ENCODE measurements at regions of chr20 and their contacts with region 1.

Region 1: GRCh38 chr20:44388466-44389023 is 33.0 kb downstream of the HNF4A start:
- DNase-seq: peak; percentile 85
- H3K4me3 ChIP-seq: no peak overlapping the region
- H3K27ac ChIP-seq: no peak overlapping the region
- H3K4me1 ChIP-seq: peaks cover 0 to 2% of the 10 kb centered on the region in 2 experiments; a peak in 1 of 4 replicates
- H3K27me3 ChIP-seq: no peaks in the 10 kb centered on the region; the same call in 1 of the 2 replicates
- CTCF ChIP-seq: peak; percentile 76
- EP300 ChIP-seq: no peak
- RAD21 ChIP-seq: peak; percentile 80

Region 2: GRCh38 chr20:44222633-44223368 is 165.7 kb before region 1 on chr20:
- CTCF ChIA-PET with region 1: interaction called, 89 read pairs
- POLR2A ChIA-PET with region 1: no interaction called
- DNase-seq: no peak
- H3K4me3 ChIP-seq: peak overlapping the region in 1 of 2 experiments; percentile 33; a peak in 1 of 4 replicates
- H3K27ac ChIP-seq: no peak overlapping the region
- H3K4me1 ChIP-seq: peaks cover 0 to 12% of the 10 kb centered on the region in 2 experiments; a peak in 1 of 4 replicates
- H3K27me3 ChIP-seq: no peaks in the 10 kb centered on the region
- CTCF ChIP-seq: peak; percentile 17; the same call in 1 of the 2 replicates
- EP300 ChIP-seq: no peak
- RAD21 ChIP-seq: no peak

Region 3: GRCh38 chr20:44402391-44403193 is 14.0 kb after region 1 on chr20:
- CTCF ChIA-PET with region 1: interaction called, 12 read pairs
- POLR2A ChIA-PET with region 1: interaction called, 3 read pairs
- DNase-seq: peak; percentile 84
- H3K4me3 ChIP-seq: no peak overlapping the region
- H3K27ac ChIP-seq: peak overlapping the region in 1 of 2 experiments; percentile 29; a peak in 2 of 4 replicates
- H3K4me1 ChIP-seq: peaks cover 0 to 10% of the 10 kb centered on the region in 2 experiments; a peak in 1 of 4 replicates
- H3K27me3 ChIP-seq: no peaks in the 10 kb centered on the region; the same call in 1 of the 2 replicates
- CTCF ChIP-seq: no peak
- EP300 ChIP-seq: no peak
- RAD21 ChIP-seq: no peak

Region 4: GRCh38 chr20:44475694-44476560 is 87.4 kb after region 1 on chr20 and contains the start of gene TTPAL:
- CTCF ChIA-PET with region 1: interaction called, 44 read pairs
- POLR2A ChIA-PET with region 1: no interaction called
- DNase-seq: peak; percentile 97
- H3K4me3 ChIP-seq: peak within 1 kb of the TSS; percentile 81 to 82
- H3K27ac ChIP-seq: peak within 1 kb of the TSS; percentile 72 to 89
- H3K4me1 ChIP-seq: peaks cover 0 to 16% of the 10 kb centered on the region in 2 experiments; a peak in 2 of 4 replicates
- H3K27me3 ChIP-seq: no peaks in the 10 kb centered on the region
- CTCF ChIP-seq: peak; percentile 36
- EP300 ChIP-seq: no peak
- RAD21 ChIP-seq: 0 out of 2 replicates have a peak, but pooled peaks have one; percentile 16
- polyA plus RNA-seq, gene TTPAL: 4.9 and 5.7 TPM in 2 replicates

Region 5: GRCh38 chr20:44544263-44544662 is 155.7 kb after region 1 on chr20:
- CTCF ChIA-PET with region 1: no interaction called
- POLR2A ChIA-PET with region 1: no interaction called
- DNase-seq: no peak
- H3K4me3 ChIP-seq: no peak overlapping the region
- H3K27ac ChIP-seq: no peak overlapping the region
- H3K4me1 ChIP-seq: peaks cover 0 to 17% of the 10 kb centered on the region in 2 experiments; a peak in 3 of 4 replicates
- H3K27me3 ChIP-seq: no peaks in the 10 kb centered on the region
- CTCF ChIP-seq: no peak
- EP300 ChIP-seq: no peak
- RAD21 ChIP-seq: no peak

Measured in SK-N-SH (cell line).